ENCODE measurements at regions of chr6 and their contacts with region 1.

Region 1: DNA sequence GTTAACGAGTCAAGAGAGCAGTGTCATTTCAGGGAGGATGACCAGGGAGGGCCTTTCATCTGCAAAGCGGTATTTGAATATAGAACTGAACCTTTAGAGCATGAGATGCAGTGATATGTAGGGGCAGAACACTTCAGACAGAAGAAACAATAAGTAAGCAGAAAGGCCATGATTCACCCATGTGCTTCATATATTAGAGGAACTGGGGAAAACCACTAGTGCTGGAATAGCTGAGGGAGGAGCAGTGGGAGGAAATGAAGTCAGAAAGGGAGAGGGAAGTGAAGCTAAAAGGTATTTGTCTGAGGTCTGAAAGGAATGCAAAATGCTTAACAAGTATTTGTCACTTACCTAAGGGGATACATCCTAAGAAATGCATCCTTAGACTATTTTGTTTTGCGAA is 391.2 kb downstream of the ADGRB3 start:
- DNase-seq: no peak
- ATAC-seq: no peak
- H3K4me3 ChIP-seq: no peak overlapping the region
- H3K4me3 Mint-ChIP-seq: no peak overlapping the region
- H3K27ac ChIP-seq: no peak overlapping the region
- H3K27ac Mint-ChIP-seq: no peak overlapping the region
- H3K4me1 ChIP-seq: no peaks in the 10 kb centered on the region
- H3K4me1 Mint-ChIP-seq: no peaks in the 10 kb centered on the region
- H3K27me3 ChIP-seq: no peaks in the 10 kb centered on the region
- H3K27me3 Mint-ChIP-seq: no peaks in the 10 kb centered on the region

Region 2: GRCh38 chr6:68990317-68990716 is 35.9 kb before region 1 on chr6:
- CTCF ChIA-PET with region 1: no interaction called
- POLR2A ChIA-PET with region 1: interaction called in 1 of 2 experiments, 10 read pairs
- DNase-seq: no peak
- ATAC-seq: no peak
- H3K4me3 ChIP-seq: no peak overlapping the region
- H3K4me3 Mint-ChIP-seq: no peak overlapping the region
- H3K27ac ChIP-seq: no peak overlapping the region
- H3K27ac Mint-ChIP-seq: no peak overlapping the region
- H3K4me1 ChIP-seq: no peaks in the 10 kb centered on the region
- H3K4me1 Mint-ChIP-seq: no peaks in the 10 kb centered on the region
- H3K27me3 ChIP-seq: no peaks in the 10 kb centered on the region
- H3K27me3 Mint-ChIP-seq: no peaks in the 10 kb centered on the region

Region 3: GRCh38 chr6:69294407-69294806 is 268.2 kb after region 1 on chr6:
- CTCF ChIA-PET with region 1: no interaction called
- POLR2A ChIA-PET with region 1: no interaction called
- DNase-seq: no peak
- ATAC-seq: no peak
- H3K4me3 ChIP-seq: no peak overlapping the region
- H3K4me3 Mint-ChIP-seq: no peak overlapping the region
- H3K27ac ChIP-seq: no peak overlapping the region
- H3K27ac Mint-ChIP-seq: no peak overlapping the region
- H3K4me1 ChIP-seq: no peaks in the 10 kb centered on the region
- H3K4me1 Mint-ChIP-seq: no peaks in the 10 kb centered on the region
- H3K27me3 ChIP-seq: no peaks in the 10 kb centered on the region
- H3K27me3 Mint-ChIP-seq: no peaks in the 10 kb centered on the region

Measured in T-cell (primary cell).